CD8-positive, alpha-beta memory T cell (primary cell): ENCODE measurements at regions of chr4 and their contacts with region 1.

Region 1: GRCh38 chr4:88613417-88613875 is 21.2 kb downstream of the HERC3 start:
- DNase-seq: peak in 4 of 5 donors; percentile 7 to 82 (median 72)
- H3K4me3 ChIP-seq: peak overlapping the region; percentile 56
- H3K4me3 Mint-ChIP-seq: peak overlapping the region; percentile 61 to 88 (median 80)
- H3K27ac ChIP-seq: peak overlapping the region; percentile 57
- H3K27ac Mint-ChIP-seq: peak overlapping the region; percentile 94 to 99 (median 96)
- H3K4me1 ChIP-seq: peaks cover 71% of the 10 kb centered on the region
- H3K4me1 Mint-ChIP-seq: peaks cover 70 to 86% (median 83%) of the 10 kb centered on the region in 3 donors
- H3K27me3 ChIP-seq: no peaks in the 10 kb centered on the region
- H3K27me3 Mint-ChIP-seq: no peaks in the 10 kb centered on the region

Region 2: DNA sequence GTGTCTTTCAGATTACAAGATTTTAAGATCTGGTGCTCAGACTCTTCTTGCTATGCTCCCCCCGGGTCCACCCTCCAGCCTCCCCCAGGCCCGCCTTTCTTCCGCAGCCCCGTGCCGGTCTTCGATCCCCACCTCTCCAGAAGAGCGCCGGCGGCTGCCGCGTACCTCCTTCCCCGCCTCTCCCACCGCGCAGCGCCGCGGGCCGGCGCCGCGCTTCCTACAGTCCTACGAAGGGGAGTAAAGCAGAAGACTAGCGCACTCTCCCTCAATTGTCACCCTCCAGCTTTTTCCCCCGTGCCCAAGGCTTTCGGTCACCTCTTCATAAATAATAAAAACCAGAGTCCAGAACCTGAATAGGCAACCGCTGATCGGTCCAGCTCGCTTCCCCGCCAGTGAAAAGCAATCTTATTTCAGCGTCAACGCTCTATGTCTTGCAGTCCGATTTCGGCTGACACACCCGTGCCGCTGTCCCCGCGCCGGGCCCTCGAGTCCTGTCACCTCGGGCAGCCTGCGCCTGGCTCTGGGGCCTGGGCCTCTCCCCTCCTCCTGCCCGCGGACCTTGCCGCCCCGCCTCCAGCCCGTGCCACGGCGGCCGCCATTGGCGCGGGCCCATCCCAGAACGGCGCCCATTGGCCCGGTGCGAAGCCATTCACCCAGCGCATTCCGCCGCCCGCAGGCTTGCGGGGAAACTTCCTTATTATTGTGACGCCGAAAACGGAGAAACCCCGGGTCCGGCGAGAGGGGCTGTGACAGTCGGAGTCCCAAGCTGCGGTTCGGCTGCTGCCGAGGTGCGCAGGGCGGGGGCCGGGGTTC is 21.5 kb before region 1 on chr4 and contains the start of gene HERC3:
- CTCF ChIA-PET with region 1: interaction called, 28 read pairs
- POLR2A ChIA-PET with region 1: interaction called, 32 read pairs
- DNase-seq: peak; percentile 84 to 92 (median 88)
- H3K4me3 ChIP-seq: peak within 1 kb of the TSS; percentile 94
- H3K4me3 Mint-ChIP-seq: peak within 1 kb of the TSS; percentile 92 to 98 (median 96)
- H3K27ac ChIP-seq: peak within 1 kb of the TSS; percentile 82
- H3K27ac Mint-ChIP-seq: peak within 1 kb of the TSS; percentile 84 to 99 (median 96)
- H3K4me1 ChIP-seq: peaks cover 28% of the 10 kb centered on the region
- H3K4me1 Mint-ChIP-seq: peaks cover 34 to 50% (median 50%) of the 10 kb centered on the region in 3 donors
- H3K27me3 ChIP-seq: no peaks in the 10 kb centered on the region
- H3K27me3 Mint-ChIP-seq: no peaks in the 10 kb centered on the region
- total RNA-seq, gene HERC3: 27.9 to 31.8 TPM